Naive thymus-derived CD4-positive, alpha-beta T cell (primary cell): ENCODE measurements at regions of chr4 and their contacts with region 1.

Region 1: DNA sequence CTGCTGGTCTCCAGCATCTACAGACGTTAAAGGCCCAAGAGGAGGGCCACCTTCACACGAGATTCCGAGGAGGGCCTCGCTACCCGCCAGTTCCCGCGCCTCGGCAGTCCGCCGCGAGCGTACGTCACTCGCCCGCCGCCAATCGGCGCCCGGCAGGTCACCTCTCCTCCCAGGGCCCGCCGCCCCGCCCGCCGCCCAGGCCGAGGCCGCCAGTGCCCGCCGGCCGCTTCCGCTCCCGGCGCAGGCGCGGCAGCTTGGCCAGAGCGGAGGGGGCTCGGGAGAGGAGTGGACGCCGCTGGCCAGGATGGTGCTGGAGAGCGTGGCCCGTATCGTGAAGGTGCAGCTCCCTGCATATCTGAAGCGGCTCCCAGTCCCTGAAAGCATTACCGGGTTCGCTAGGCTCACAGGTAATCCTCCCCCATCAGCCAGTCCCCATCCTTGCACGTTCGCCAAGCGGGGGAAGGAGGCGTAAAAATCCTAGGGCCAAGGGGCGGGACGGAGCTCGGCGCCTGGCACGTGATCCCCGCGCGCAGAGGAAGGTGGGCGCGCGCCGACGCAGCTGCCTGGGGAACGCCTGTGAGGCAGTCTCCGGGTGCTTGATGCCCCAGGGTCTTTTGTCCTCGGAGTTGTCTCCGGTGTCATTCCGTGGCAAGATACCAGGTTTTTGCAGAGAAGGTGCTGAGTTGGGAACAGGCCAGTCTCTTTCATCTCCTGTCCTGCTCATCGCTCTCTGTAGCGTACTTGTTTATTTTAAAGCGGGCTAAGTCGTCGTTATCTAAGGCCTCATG is at the start of gene CISD2:
- DNase-seq: peak; percentile 87 to 95 (median 92)
- ATAC-seq: peak; percentile 90
- H3K4me3 ChIP-seq: peak within 1 kb of the TSS; percentile 95
- H3K4me3 Mint-ChIP-seq: peak within 1 kb of the TSS; percentile 88 to 100 (median 96)
- H3K27ac ChIP-seq: peak within 1 kb of the TSS; percentile 99
- H3K27ac Mint-ChIP-seq: peak within 1 kb of the TSS; percentile 98 to 100 (median 99)
- H3K4me1 ChIP-seq: peaks cover 16 to 28% of the 10 kb centered on the region in 2 donors
- H3K4me1 Mint-ChIP-seq: peaks cover 32 to 80% (median 71%) of the 10 kb centered on the region in 7 donors
- H3K27me3 ChIP-seq: no peaks in the 10 kb centered on the region
- H3K27me3 Mint-ChIP-seq: no peaks in the 10 kb centered on the region
- total RNA-seq, gene CISD2: 11.4 to 50.3 (median 13.4) TPM

Region 2: GRCh38 chr4:102362922-102363432 is 506.0 kb before region 1 on chr4:
- CTCF ChIA-PET with region 1: no interaction called
- POLR2A ChIA-PET with region 1: no interaction called
- intact Hi-C with region 1: no loop called
- DNase-seq: no peak
- ATAC-seq: no peak
- H3K4me3 ChIP-seq: no peak overlapping the region
- H3K4me3 Mint-ChIP-seq: no peak overlapping the region
- H3K27ac ChIP-seq: no peak overlapping the region
- H3K27ac Mint-ChIP-seq: no peak overlapping the region
- H3K4me1 ChIP-seq: no peaks in the 10 kb centered on the region
- H3K4me1 Mint-ChIP-seq: peaks cover 0 to 2% (median 1%) of the 10 kb centered on the region in 7 donors
- H3K27me3 ChIP-seq: no peaks in the 10 kb centered on the region
- H3K27me3 Mint-ChIP-seq: peaks cover 0 to 7% (median 0%) of the 10 kb centered on the region in 5 donors

Region 3: GRCh38 chr4:102627831-102628523 is 241.0 kb before region 1 on chr4:
- CTCF ChIA-PET with region 1: interaction called, 3 read pairs
- POLR2A ChIA-PET with region 1: interaction called, 5 read pairs
- intact Hi-C with region 1: loop called in 1 of 2 experiments (anchors 1 kb)
- DNase-seq: no peak
- ATAC-seq: no peak
- H3K4me3 ChIP-seq: no peak overlapping the region
- H3K4me3 Mint-ChIP-seq: peak overlapping the region in 4 of 10 donors; percentile 16 to 92 (median 58)
- H3K27ac ChIP-seq: no peak overlapping the region
- H3K27ac Mint-ChIP-seq: peak overlapping the region in 7 of 9 donors; percentile 15 to 100 (median 87)
- H3K4me1 ChIP-seq: peaks cover 29 to 42% of the 10 kb centered on the region in 2 donors
- H3K4me1 Mint-ChIP-seq: peaks cover 29 to 91% (median 65%) of the 10 kb centered on the region in 7 donors
- H3K27me3 ChIP-seq: no peaks in the 10 kb centered on the region
- H3K27me3 Mint-ChIP-seq: no peaks in the 10 kb centered on the region

Region 4: GRCh38 chr4:102815981-102816380 is 53.0 kb before region 1 on chr4:
- CTCF ChIA-PET with region 1: interaction called, 3 read pairs
- POLR2A ChIA-PET with region 1: interaction called, 15 read pairs
- intact Hi-C with region 1: no loop called
- DNase-seq: no peak
- ATAC-seq: no peak
- H3K4me3 ChIP-seq: no peak overlapping the region
- H3K4me3 Mint-ChIP-seq: peak overlapping the region in 6 of 10 donors; percentile 39 to 79 (median 70)
- H3K27ac ChIP-seq: peak overlapping the region; percentile 9
- H3K27ac Mint-ChIP-seq: peak overlapping the region in 7 of 9 donors; percentile 61 to 84 (median 69)
- H3K4me1 ChIP-seq: peaks cover 77 to 81% of the 10 kb centered on the region in 2 donors
- H3K4me1 Mint-ChIP-seq: peaks cover 77 to 94% (median 91%) of the 10 kb centered on the region in 7 donors
- H3K27me3 ChIP-seq: no peaks in the 10 kb centered on the region
- H3K27me3 Mint-ChIP-seq: no peaks in the 10 kb centered on the region

Region 5: GRCh38 chr4:102901804-102902203 is 32.8 kb after region 1 on chr4:
- CTCF ChIA-PET with region 1: no interaction called
- POLR2A ChIA-PET with region 1: no interaction called
- intact Hi-C with region 1: no loop called
- DNase-seq: no peak
- ATAC-seq: no peak
- H3K4me3 ChIP-seq: no peak overlapping the region
- H3K4me3 Mint-ChIP-seq: no peak overlapping the region
- H3K27ac ChIP-seq: no peak overlapping the region
- H3K27ac Mint-ChIP-seq: no peak overlapping the region
- H3K4me1 ChIP-seq: no peaks in the 10 kb centered on the region
- H3K4me1 Mint-ChIP-seq: no peaks in the 10 kb centered on the region
- H3K27me3 ChIP-seq: no peaks in the 10 kb centered on the region
- H3K27me3 Mint-ChIP-seq: no peaks in the 10 kb centered on the region

Region 6: DNA sequence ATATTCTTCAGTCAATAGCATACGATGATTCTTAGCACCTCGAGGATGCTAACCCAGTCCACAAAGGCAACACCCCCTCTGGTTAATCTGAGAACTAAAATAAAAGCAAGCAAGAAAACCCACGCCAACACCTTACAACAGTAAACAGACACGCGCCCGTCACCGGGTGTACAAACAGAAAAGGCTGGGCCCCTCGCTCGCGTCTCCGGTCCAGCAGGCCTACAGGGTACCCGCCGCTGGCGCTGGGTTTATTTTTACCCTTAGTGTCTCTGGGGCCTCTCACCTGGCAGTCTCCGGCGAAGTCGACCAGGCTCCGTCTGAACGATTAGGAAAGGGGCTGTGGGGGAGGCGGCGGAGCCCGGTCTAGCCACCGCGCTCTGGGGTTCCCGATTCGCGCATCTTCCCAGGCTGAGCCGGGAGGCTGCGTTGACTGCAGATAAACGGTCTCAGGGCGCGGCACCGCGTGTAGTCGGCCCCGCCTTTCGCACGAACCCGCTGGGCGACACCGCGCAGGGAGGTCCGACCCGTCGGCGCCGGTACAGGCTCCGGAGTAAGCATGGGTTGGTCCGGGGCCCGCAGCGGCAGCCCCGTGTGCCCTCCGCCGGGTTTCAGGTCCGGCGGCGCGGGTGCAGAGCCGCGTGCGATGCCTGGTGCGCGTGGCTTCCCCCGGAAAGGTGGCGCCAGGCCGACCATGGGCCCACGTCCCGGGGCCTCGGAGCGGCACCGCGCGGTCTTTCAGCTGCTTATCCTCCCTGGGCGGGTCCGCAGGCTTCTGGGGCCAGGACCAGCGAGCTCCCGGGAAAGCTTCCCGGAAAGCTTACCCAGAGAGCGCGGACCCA is 207.1 kb after region 1 on chr4:
- CTCF ChIA-PET with region 1: no interaction called
- POLR2A ChIA-PET with region 1: interaction called, 6 read pairs
- intact Hi-C with region 1: loop called (anchors 2 to 5 kb)
- DNase-seq: peak; percentile 53 to 75 (median 68)
- ATAC-seq: peak; percentile 83
- H3K4me3 ChIP-seq: peak overlapping the region; percentile 74
- H3K4me3 Mint-ChIP-seq: peak overlapping the region; percentile 77 to 97 (median 95)
- H3K27ac ChIP-seq: peak overlapping the region; percentile 87
- H3K27ac Mint-ChIP-seq: peak overlapping the region; percentile 86 to 99 (median 97)
- H3K4me1 ChIP-seq: peaks cover 10 to 17% of the 10 kb centered on the region in 2 donors
- H3K4me1 Mint-ChIP-seq: peaks cover 23 to 54% (median 47%) of the 10 kb centered on the region in 7 donors
- H3K27me3 ChIP-seq: no peaks in the 10 kb centered on the region
- H3K27me3 Mint-ChIP-seq: no peaks in the 10 kb centered on the region